ENCODE measurements at regions of chr3 and their contacts with region 1.

Region 1: GRCh38 chr3:17841190-17841828 is 98.9 kb upstream of the TBC1D5 start:
- DNase-seq: peak; percentile 84
- H3K4me3 Mint-ChIP-seq: no peak overlapping the region
- H3K27ac Mint-ChIP-seq: no peak overlapping the region
- H3K4me1 Mint-ChIP-seq: no peaks in the 10 kb centered on the region
- H3K27me3 Mint-ChIP-seq: no peaks in the 10 kb centered on the region

Region 2: DNA sequence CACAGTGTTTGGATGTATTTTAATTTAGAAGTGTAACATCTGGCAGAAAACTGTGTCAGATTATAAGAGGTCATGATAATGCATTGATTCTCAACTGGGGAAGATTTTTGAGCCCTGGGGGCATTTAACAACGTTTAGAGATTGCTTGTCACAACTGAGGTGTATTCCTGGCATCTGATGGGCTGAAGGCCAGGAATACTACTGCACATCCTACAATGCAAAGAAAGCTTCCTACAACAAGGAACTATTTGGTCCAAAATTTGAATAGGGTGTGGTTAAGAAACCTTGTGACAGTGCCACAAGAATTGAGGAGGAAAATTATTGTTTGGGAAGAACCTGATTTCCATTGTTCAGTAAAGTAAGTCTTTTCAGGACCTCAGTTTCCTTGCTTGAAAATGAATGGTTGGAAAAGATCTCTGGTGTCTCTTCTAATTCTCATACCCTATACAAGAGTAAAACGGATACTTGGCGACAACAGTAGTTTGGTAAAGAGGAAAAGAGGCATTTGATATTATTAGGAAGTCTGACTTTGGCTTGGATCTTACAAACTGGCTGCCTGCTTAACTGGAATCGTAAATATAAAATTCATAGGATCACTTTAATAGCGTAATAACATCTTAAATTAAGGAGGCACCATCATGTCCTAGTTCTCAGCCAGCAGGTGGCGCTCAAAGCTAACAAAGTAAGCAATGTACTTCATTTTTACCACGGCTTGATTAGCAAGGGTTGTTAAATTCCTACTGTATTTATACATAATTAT is 1240.3 kb before region 1 on chr3:
- CTCF ChIA-PET with region 1: interaction called, 4 read pairs
- intact Hi-C with region 1: loop called (anchors 2 kb)
- DNase-seq: peak; percentile 90
- H3K4me3 Mint-ChIP-seq: no peak overlapping the region
- H3K27ac Mint-ChIP-seq: no peak overlapping the region
- H3K4me1 Mint-ChIP-seq: peaks cover 19% of the 10 kb centered on the region
- H3K27me3 Mint-ChIP-seq: no peaks in the 10 kb centered on the region

Region 3: GRCh38 chr3:17333446-17333845 is 507.9 kb before region 1 on chr3:
- CTCF ChIA-PET with region 1: no interaction called
- intact Hi-C with region 1: no loop called
- DNase-seq: no peak
- H3K4me3 Mint-ChIP-seq: no peak overlapping the region
- H3K27ac Mint-ChIP-seq: no peak overlapping the region
- H3K4me1 Mint-ChIP-seq: no peaks in the 10 kb centered on the region
- H3K27me3 Mint-ChIP-seq: no peaks in the 10 kb centered on the region

Region 4: GRCh38 chr3:17412950-17413530 is 428.3 kb before region 1 on chr3:
- CTCF ChIA-PET with region 1: interaction called, 10 read pairs
- intact Hi-C with region 1: loop called (anchors 5 kb)
- DNase-seq: peak; percentile 10
- H3K4me3 Mint-ChIP-seq: no peak overlapping the region
- H3K27ac Mint-ChIP-seq: no peak overlapping the region
- H3K4me1 Mint-ChIP-seq: no peaks in the 10 kb centered on the region
- H3K27me3 Mint-ChIP-seq: no peaks in the 10 kb centered on the region

Region 5: DNA sequence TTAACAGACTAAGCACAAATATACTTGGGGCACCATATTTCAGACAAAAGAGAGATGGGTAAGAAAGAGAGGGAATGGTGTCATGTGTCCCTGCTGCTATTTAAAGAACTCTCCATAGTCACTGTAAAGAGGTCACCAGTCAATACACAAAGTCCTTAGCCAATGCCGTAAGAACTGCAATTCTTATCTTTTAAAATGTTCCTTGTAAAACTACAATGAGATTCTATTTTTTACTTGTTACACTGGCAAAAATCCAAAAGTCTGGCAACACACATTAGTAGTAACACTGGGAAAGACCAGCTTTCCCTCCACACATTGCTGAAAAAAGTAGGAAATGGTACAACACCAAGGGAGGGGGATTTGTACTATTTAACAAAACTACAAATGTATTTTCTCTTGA is 288.2 kb before region 1 on chr3:
- CTCF ChIA-PET with region 1: no interaction called
- intact Hi-C with region 1: loop called (anchors 5 kb)
- DNase-seq: no peak
- H3K4me3 Mint-ChIP-seq: no peak overlapping the region
- H3K27ac Mint-ChIP-seq: no peak overlapping the region
- H3K4me1 Mint-ChIP-seq: peaks cover 4% of the 10 kb centered on the region
- H3K27me3 Mint-ChIP-seq: no peaks in the 10 kb centered on the region

Region 6: DNA sequence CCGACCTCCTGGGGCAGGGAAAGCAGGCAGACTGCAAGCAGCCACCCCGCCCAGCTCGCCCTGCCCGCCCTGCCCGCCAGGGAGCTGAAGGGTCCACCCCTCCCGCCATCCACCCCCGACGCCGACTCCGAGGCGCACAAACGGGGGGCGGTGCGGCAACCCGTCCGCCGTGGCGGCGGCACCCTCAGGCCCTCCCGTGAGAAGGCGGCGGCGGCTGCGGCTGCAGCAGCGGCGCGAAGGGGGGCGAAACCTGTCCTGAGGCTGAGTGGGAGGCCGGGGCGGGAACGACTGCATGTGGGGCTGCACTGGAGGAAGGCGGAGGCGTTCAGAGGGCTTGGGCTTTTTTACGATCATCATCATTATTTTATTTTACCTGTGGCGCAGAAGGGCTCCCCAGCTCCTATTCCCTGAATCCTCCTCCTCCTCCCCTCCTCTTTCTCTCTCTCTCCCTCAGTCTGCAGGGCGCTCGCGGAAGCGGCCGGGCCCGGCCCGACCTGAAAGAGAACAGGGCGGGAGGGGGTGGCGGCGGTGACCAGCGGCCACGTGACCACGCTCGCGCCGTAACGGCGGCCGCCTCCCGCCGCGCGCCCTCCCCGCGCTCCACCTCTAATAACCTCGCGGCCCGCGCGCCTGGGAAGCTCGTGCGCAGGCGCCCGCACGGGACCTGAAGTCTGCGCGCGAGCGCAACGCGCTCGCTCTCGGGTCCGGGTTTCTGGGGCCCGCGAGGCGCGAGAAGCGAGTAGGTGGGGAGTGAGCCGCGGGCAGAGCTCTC is 99.0 kb before region 1 on chr3 and contains the start of gene TBC1D5:
- CTCF ChIA-PET with region 1: interaction called, 10 read pairs
- intact Hi-C with region 1: no loop called
- DNase-seq: peak; percentile 95
- H3K4me3 Mint-ChIP-seq: peak within 1 kb of the TSS; percentile 92
- H3K27ac Mint-ChIP-seq: peak within 1 kb of the TSS; percentile 94
- H3K4me1 Mint-ChIP-seq: peaks cover 40% of the 10 kb centered on the region
- H3K27me3 Mint-ChIP-seq: no peaks in the 10 kb centered on the region
- total RNA-seq, gene TBC1D5: 54.4 to 57.2 TPM

Region 7: DNA sequence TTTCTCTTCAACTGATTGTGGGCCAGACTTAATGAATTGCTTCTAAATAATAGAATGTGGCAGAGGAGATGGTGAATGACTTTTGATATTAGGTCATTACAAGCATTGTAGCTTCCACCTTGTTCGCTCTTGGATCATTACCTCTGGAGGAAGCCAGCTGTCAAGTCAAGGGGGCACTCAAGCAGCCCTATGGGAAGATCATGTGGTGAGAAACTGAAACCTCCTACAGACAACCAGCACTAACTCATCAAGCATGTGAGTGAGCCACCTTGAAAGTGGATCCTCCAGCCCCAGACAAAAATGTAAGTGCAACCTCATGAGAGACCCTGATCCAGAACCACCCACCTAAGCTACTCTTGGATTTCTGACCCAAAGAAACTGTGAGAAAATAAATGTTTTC is 10.9 kb after region 1 on chr3:
- CTCF ChIA-PET with region 1: interaction called, 15 read pairs
- intact Hi-C with region 1: no loop called
- DNase-seq: no peak
- H3K4me3 Mint-ChIP-seq: no peak overlapping the region
- H3K27ac Mint-ChIP-seq: no peak overlapping the region
- H3K4me1 Mint-ChIP-seq: no peaks in the 10 kb centered on the region
- H3K27me3 Mint-ChIP-seq: no peaks in the 10 kb centered on the region